Tibial artery (tissue), 4 donors: ENCODE measurements at regions of chr1 and their contacts with region 1.

Region 1: DNA sequence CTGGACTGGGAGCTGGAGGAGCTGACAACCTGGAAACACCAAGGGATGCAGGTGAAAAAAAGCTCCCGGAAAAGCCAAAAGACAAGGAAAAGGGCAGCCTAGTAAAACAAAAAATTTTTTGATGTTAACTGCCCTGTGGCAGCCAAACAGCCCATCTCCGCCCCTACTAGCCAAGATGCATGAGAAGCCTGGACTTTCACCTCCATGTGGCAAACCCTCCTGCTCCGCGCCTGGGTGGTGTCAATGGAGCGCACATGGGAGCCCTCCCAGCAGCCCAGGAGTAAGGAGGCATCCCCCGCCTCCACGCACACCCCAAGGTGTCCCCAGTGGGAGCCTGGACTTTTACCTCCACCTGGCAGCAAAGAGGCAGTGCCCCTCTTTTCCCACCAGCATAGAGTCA is 30.5 kb downstream of the LEMD1 start:
- DNase-seq: no peak
- H3K4me3 ChIP-seq: no peak overlapping the region
- H3K27ac ChIP-seq: no peak overlapping the region
- H3K4me1 ChIP-seq: no peaks in the 10 kb centered on the region
- H3K27me3 ChIP-seq: peaks cover 0 to 21% of the 10 kb centered on the region in 2 donors
- CTCF ChIP-seq: no peak

Region 2: GRCh38 chr1:204819495-204819894 is 571.9 kb before region 1 on chr1:
- intact Hi-C with region 1: no loop called
- DNase-seq: no peak
- H3K4me3 ChIP-seq: no peak overlapping the region
- H3K27ac ChIP-seq: peak overlapping the region; percentile 47 to 55
- H3K4me1 ChIP-seq: peaks cover 0 to 47% (median 37%) of the 10 kb centered on the region in 4 donors
- H3K27me3 ChIP-seq: no peaks in the 10 kb centered on the region
- CTCF ChIP-seq: no peak

Region 3: DNA sequence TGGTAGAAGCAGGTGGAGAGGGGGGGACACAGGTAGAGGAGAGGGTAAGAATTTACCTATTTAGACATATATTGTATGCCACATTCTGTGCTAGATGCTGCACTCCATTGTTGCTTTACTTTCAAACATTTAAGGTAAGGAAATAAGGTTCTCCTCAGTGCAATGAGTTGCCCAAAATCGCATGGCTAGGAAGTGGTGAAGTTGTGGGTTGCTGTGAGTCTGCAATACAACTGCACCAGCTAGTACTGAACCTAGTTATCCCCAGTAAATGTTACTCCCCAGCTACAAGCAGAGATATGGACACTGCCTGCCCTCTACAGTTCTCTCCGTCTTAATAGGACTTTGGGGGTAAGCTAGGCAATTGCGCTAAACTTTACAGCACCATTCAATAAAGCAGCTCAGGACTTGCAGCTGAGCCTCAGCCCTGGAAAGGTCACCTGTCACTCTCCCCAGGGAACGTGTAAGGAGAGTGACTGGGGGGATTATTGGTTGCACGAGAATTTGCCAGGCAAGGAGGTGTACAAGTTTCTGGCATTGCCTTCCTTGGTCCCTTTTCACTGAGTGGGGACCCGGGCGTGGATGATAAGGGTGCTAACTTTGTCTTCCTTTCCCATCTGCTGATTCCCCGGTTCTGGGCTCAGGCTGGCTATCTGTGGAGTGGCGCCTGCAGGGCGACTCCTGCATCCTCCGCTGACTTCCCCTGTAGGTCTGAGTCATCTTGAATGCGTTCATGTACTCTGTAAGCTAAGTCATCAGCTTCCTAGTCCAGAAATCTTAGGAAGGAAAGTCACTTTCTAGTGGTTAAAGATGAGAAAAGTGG is 419.7 kb before region 1 on chr1:
- intact Hi-C with region 1: no loop called
- DNase-seq: no peak
- H3K4me3 ChIP-seq: no peak overlapping the region
- H3K27ac ChIP-seq: no peak overlapping the region
- H3K4me1 ChIP-seq: no peaks in the 10 kb centered on the region
- H3K27me3 ChIP-seq: no peaks in the 10 kb centered on the region
- CTCF ChIP-seq: no peak

Region 4: GRCh38 chr1:205298191-205298994 is 93.0 kb before region 1 on chr1:
- intact Hi-C with region 1: loop called (anchors 5 kb)
- DNase-seq: no peak
- H3K4me3 ChIP-seq: no peak overlapping the region
- H3K27ac ChIP-seq: no peak overlapping the region
- H3K4me1 ChIP-seq: peaks cover 0 to 40% (median 20%) of the 10 kb centered on the region in 4 donors
- H3K27me3 ChIP-seq: no peaks in the 10 kb centered on the region
- CTCF ChIP-seq: no peak

Region 5: DNA sequence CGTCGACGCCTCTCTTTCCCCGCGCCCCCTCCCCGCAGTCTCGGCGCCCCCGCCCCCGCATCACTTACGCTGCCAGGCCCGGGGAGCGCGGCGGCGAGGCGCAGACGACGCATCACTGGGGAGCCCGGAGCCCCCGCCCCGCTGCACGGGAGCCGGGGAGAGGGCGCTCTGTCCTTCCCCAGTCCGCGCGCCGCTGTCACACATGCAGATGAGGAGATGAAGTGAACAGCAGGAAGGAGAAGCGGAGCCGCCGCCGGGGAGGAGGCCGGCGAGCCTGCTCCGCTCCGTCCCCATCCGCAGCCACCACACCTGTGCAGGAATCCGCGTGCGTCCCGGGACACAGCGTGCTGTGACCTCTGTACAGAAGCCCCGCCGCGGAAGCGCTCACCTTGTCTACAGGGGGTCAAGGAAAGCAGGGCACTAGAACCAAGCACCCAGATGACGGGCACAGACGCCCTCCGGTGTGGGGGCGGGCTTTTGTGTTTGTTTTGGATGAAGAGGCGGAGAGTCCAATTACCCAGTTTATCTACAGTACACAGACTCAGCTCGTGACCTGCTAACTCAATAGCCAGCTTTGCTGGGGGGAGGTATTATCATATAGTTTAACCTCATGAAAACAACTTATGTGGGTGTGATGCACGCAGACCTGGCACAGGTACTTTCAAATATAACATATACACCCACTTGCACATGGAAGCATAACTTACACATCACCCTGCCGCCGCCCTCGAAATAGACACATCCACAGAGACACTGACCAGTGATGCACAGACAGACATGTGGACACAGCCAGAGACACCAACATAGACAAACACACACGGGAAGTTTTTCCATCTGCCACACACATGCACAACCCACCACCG is 47.1 kb before region 1 on chr1:
- intact Hi-C with region 1: no loop called
- DNase-seq: peak in 1 of 2 donors; percentile 40
- H3K4me3 ChIP-seq: peak overlapping the region; percentile 24 to 39
- H3K27ac ChIP-seq: no peak overlapping the region
- H3K4me1 ChIP-seq: peaks cover 0 to 15% (median 13%) of the 10 kb centered on the region in 4 donors
- H3K27me3 ChIP-seq: peaks cover 0 to 66% of the 10 kb centered on the region in 2 donors
- CTCF ChIP-seq: no peak

Region 6: GRCh38 chr1:205354259-205354904 is 37.0 kb before region 1 on chr1:
- intact Hi-C with region 1: no loop called
- DNase-seq: peak in 1 of 2 donors; percentile 67
- H3K4me3 ChIP-seq: no peak overlapping the region
- H3K27ac ChIP-seq: no peak overlapping the region
- H3K4me1 ChIP-seq: peaks cover 0 to 9% (median 0%) of the 10 kb centered on the region in 4 donors
- H3K27me3 ChIP-seq: peaks cover 0 to 19% of the 10 kb centered on the region in 2 donors
- CTCF ChIP-seq: peak; percentile 77 to 79